Head of caudate nucleus (tissue), 42 donors: ENCODE measurements at regions of chr7 and their contacts with region 1.

Region 1: DNA sequence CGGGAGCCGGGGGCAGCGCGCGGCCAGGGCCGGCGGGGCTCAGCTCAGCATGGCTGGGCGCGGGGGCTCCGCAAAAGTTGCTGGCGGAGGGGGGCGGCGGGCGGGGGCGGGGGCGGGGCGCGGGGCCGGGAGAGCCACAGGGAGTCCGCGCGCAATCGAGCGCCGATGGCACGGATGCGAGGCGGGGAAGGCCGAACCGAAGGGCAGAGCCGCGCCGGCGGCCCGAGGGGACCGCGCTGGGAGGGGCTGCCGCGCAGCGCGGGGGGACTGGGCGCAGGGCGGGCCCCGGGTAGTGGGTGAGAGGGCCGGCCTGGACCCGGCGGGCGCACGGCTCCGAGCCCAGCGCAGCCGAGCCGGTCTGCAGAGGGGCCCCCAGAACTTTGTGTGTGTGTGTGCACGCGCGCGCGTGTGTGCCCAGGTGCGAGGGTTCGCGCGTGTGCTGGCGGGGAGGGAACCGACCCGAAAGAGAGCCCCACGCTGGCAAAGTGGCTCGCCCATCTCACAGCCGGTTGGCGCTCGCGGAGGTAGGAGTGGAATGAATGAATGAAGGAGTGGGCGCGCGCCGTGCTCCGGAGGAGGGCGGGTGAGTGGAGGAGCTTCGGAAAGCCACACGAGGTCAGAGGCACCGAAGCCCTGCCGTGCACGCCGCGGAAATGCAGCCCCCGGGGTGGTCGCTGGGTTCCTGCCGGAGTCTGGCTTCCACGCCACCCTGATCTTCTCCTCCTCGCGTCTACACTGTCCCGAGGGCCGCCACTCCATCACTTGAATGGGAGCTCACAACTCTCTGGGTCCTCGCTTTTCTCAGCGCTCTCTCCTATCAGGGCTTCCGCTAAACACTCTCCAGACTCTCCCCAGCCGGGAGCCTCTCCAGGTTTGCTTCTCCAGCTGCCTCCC is at the start of gene HIPK2:
- DNase-seq: peak; percentile 59 to 93 (median 83)

Region 2: GRCh38 chr7:139645572-139646523 is 132.3 kb before region 1 on chr7:
- intact Hi-C with region 1: loop called (anchors 5 kb)
- DNase-seq: peak; percentile 78 to 97 (median 90)

Region 3: GRCh38 chr7:139660317-139661042 is 117.7 kb before region 1 on chr7:
- intact Hi-C with region 1: no loop called
- DNase-seq: peak in 1 of 42 donors; percentile 35